SK-N-SH (cell line): ENCODE measurements at regions of chr2 and their contacts with region 1.

Region 1: DNA sequence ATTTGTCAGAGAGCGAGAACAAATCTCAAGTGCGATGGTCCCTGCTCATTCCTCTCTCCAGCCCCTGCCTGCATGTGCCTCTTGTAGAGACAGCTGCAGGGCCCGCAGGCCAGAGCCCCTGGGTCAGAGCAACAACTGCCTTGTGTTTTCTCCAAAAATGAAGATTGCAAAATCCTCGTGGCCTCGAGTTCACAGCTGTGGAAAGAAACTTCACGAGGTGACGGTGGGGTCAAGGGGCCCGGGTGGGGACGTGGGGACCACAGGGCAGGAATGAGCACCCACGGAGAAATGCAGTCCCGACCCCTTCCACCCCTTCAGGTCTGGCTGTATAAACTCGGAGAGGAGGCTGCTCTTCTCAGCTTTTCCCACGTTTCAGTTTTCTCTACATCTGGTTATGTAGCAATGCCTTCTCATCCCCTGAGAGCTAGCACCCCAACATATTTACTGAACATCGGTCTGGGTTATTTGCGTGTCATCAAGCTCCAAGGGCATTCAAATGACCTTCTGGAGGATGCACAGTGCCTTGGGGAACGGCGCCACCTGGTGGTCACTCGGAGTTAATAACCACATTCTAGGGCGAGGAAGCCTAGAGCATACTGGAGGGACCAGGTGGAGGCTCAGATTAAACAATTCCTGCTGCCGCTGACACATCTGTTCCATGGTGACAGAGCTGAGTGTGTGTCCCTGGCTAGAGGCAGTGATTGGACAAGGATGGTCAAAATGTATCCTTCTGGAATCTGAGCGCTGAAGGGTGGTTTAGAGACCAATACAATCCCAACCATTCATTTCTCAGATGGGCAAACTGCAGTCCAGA is 91.4 kb upstream of the CYRIA start:
- DNase-seq: peak; percentile 79
- H3K4me3 ChIP-seq: peak overlapping the region in 1 of 2 experiments; percentile 27; a peak in 1 of 4 replicates
- H3K27ac ChIP-seq: no peak overlapping the region
- H3K4me1 ChIP-seq: peaks cover 0 to 4% of the 10 kb centered on the region in 2 experiments; a peak in 1 of 4 replicates
- H3K27me3 ChIP-seq: no peaks in the 10 kb centered on the region
- CTCF ChIP-seq: peak; percentile 95
- EP300 ChIP-seq: no peak
- RAD21 ChIP-seq: peak; percentile 99

Region 2: DNA sequence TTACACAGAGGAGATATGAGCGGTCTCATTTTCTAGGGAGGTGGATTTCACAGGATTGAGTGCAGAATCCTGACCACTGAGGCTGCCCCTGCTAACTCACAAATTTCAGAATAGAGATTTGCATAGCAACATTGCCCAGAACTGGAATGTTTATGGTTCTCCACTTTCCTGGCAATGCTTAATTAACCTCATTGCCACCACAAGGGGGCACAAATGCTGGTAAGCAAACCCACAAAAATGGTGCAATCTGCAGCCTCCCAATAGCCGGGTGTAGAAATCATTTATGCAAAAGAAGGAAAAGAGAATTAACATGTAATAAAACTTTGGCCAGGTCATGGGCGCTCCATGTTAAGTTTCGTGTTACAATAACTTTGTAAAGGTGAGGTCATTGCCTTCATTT is 203.8 kb before region 1 on chr2:
- CTCF ChIA-PET with region 1: interaction called, 38 read pairs
- POLR2A ChIA-PET with region 1: no interaction called
- DNase-seq: peak; percentile 28
- H3K4me3 ChIP-seq: no peak overlapping the region; a peak in 1 of 4 replicates
- H3K27ac ChIP-seq: no peak overlapping the region
- H3K4me1 ChIP-seq: no peaks in the 10 kb centered on the region
- H3K27me3 ChIP-seq: no peaks in the 10 kb centered on the region
- CTCF ChIP-seq: peak; percentile 58
- EP300 ChIP-seq: no peak
- RAD21 ChIP-seq: peak; percentile 62

Region 3: DNA sequence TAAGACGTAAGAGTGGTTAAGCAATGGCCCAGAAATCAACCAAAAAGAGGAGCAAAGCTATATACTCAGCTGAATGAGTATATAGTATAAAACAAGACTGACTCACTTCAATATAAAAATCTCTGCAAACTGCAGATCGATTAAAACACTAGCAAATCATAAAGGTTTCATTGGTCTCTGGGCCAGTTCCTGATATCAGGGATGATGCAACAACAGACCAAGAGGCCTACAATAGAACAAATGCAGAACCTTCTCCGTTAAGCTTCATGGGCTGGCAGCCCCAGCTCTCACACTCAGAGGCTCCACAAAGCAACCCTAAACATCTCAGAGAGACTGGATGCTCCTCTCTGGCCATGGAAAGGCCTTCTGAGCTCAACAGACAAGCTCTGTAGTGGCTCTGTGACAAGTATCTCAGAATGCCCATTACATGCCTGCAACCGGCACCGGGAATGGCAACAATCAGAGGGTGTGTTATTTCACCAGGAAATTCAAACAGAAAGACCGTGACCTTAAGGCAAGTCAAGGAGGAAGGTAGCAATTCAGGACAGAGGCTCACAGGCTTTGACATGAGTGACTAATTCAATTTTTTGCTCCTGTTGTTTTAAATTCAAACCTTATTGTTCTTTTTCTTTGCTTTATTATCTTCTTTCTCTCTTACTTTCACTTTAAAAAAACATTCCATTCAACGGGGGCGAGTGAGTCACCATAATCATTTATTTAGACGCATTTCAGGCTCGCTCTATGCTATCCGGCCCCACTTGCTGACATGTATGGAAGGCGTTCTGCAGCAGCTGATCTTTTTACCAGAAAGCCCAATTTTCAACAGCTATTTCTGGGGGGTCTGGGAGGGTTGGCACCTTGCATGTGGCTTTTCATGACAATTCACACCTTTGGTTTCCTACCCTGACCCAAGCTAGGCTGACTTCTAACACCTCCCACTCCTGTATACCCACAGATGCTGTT is 106.5 kb before region 1 on chr2:
- CTCF ChIA-PET with region 1: interaction called, 28 read pairs
- POLR2A ChIA-PET with region 1: no interaction called
- DNase-seq: no peak
- H3K4me3 ChIP-seq: peak overlapping the region; percentile 0 to 9; a peak in 1 of 4 replicates
- H3K27ac ChIP-seq: peak overlapping the region in 1 of 2 experiments; percentile 3; a peak in 1 of 4 replicates
- H3K4me1 ChIP-seq: peaks cover 7 to 11% of the 10 kb centered on the region in 2 experiments; a peak in 2 of 4 replicates
- H3K27me3 ChIP-seq: no peaks in the 10 kb centered on the region
- CTCF ChIP-seq: no peak
- EP300 ChIP-seq: no peak
- RAD21 ChIP-seq: no peak

Region 4: DNA sequence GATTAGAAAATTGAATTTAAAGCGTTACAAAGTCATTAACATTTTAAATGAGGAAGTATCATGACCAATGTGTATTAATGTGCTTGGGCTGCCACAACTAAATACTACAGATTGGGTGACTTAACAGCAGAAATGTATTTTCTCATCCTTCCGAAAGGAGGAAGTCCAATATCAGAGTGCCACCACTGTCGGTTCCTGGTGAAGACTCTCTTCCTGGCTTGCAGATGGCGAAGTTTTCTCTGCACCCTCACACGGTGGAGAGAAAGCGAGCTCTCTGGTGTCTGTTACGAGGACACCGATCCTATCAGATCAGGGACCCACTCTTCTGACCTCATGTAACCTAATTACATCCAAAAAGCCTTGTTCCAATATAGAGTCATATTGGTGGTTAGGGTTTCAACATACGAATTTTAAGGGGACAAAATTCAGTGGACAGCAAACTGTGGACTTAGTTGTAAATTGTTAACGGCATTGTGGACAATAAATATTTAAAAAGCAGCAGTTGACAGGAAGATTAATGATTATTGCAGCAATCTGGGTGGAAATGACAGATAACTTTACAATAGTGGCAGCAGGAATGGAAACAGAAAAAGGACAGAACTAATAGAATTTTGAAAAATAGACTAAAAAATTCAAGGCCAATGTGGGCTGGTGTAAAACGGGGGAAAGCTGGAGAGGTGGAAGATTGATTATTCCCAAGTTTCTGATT is 56.3 kb before region 1 on chr2:
- CTCF ChIA-PET with region 1: interaction called, 13 read pairs
- POLR2A ChIA-PET with region 1: no interaction called
- DNase-seq: no peak
- H3K4me3 ChIP-seq: no peak overlapping the region
- H3K27ac ChIP-seq: no peak overlapping the region
- H3K4me1 ChIP-seq: no peaks in the 10 kb centered on the region
- H3K27me3 ChIP-seq: no peaks in the 10 kb centered on the region
- CTCF ChIP-seq: no peak
- EP300 ChIP-seq: no peak
- RAD21 ChIP-seq: no peak

Region 5: DNA sequence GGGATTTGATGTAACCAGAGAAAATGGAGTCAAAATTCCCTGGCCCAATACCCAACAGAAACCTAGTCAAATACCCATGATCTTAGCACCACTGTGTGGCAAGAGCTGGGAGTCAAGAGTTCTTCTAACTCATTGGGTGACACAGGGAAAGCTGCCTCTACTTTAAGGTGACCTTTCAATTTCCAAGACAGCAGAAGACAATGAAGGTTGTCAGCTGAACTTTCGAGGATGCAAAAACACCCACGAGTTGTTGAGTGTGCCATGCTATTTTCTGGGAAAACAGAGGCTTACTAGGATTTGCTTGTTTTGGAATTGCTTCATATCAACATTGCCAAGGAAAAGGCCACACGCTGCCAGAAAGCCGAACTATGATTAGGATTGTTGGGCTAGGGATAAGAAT is 29.8 kb before region 1 on chr2:
- CTCF ChIA-PET with region 1: interaction called, 11 read pairs
- POLR2A ChIA-PET with region 1: no interaction called
- DNase-seq: no peak
- H3K4me3 ChIP-seq: no peak overlapping the region
- H3K27ac ChIP-seq: no peak overlapping the region
- H3K4me1 ChIP-seq: peaks cover 0 to 4% of the 10 kb centered on the region in 2 experiments; a peak in 1 of 4 replicates
- H3K27me3 ChIP-seq: no peaks in the 10 kb centered on the region
- CTCF ChIP-seq: no peak
- EP300 ChIP-seq: no peak
- RAD21 ChIP-seq: peak; percentile 22; the same call in 1 of the 2 replicates

Region 6: GRCh38 chr2:16840496-16841172 is 83.6 kb after region 1 on chr2:
- CTCF ChIA-PET with region 1: no interaction called
- POLR2A ChIA-PET with region 1: no interaction called
- DNase-seq: no peak
- H3K4me3 ChIP-seq: no peak overlapping the region
- H3K27ac ChIP-seq: no peak overlapping the region
- H3K4me1 ChIP-seq: no peaks in the 10 kb centered on the region
- H3K27me3 ChIP-seq: no peaks in the 10 kb centered on the region
- CTCF ChIP-seq: no peak
- EP300 ChIP-seq: no peak
- RAD21 ChIP-seq: no peak

Region 7: DNA sequence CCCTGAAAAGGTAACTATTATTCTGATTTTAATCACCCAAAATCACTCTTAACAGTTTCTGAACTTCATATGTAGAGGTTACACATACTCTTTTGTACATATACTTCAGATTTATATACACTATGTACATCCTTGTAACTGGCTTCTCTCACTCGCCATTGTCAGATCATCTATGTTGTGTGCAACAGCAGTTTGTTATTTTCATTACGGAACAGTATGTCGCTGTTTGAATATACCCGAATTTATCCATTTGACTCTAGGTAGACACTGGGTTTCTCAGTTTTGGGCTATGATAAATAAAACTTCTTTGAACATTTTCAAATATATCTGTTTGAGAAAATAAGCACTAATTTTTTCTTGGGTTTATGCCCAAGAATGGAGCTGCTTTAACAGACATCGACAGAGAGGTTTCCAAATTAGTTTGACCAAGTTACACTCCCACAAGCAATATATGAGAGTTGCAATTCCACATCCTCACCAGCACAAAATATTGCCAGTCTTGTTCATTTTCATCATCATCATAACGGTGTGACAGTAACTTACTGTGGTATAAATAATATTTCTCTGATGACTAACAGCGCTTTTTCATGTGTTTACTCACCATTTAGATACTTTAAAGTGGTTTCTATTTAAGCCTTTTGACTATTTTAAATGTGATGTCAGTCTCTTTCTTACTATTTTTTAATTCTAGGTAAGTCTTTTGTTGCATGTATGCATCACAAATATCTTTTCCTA is 915.7 kb after region 1 on chr2:
- CTCF ChIA-PET with region 1: interaction called, 13 read pairs
- POLR2A ChIA-PET with region 1: no interaction called
- DNase-seq: no peak
- H3K4me3 ChIP-seq: no peak overlapping the region
- H3K27ac ChIP-seq: peak overlapping the region in 1 of 2 experiments; percentile 59; a peak in 3 of 4 replicates
- H3K4me1 ChIP-seq: peaks cover 5 to 10% of the 10 kb centered on the region in 2 experiments; a peak in 1 of 4 replicates
- H3K27me3 ChIP-seq: no peaks in the 10 kb centered on the region
- CTCF ChIP-seq: 0 out of 2 replicates have a peak, but pooled peaks have one; percentile 28
- EP300 ChIP-seq: no peak
- RAD21 ChIP-seq: no peak